Posterior cingulate gyrus (tissue), 11 donors: ENCODE measurements at regions of chr6 and their contacts with region 1.

Region 1: DNA sequence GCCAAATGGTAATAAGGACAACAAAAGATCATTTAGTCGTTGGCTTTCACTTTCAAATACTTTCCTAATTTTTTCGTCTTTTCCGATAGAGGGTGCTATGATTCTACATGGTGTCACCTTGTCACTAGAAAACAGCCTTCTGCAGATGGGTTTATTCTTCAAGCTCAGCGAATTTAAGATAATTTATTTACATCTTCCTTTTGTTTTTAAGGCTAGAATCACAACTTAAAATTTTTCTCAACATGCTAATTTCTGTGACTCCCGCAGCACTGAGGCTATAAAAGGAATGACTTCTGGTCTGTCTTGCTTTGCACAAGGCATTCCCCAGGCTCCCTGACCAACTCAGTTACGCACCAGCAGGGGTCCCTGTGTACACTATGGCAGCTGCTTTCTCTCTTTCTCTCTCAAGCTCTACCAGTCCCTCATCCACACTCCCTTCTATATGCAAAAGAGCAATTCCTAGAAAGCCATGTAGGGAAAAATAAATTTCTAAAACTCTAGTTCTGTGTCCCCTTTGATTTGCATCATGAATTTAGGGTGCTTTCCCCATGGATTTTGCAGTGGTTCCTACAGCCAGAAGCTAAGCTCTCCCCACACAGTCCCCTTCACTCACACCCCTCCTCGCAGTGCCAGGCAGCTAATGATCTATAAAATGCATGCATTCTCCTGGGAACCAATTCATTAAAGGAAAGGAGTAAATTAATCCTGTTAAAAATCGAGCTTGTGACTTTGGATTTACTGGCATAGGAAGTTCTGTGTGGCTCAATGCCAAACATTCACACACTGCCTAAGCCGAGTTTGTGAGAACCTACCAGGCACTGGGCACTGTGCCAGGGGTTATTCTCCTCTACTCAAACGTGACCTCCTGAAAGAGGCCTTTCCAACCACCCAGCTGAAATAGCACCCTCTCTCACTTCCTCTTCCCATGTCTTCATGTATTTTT is 74.5 kb downstream of the DCDC2 start:
- DNase-seq: peak; percentile 34 to 94 (median 66)

Region 2: GRCh38 chr6:24387818-24388217 is 104.5 kb after region 1 on chr6:
- intact Hi-C with region 1: loop called (anchors 2 kb)
- DNase-seq: no peak

Region 3: GRCh38 chr6:24524805-24525204 is 241.5 kb after region 1 on chr6:
- intact Hi-C with region 1: no loop called
- DNase-seq: peak in 2 of 10 donors; percentile 10 to 23

Region 4: DNA sequence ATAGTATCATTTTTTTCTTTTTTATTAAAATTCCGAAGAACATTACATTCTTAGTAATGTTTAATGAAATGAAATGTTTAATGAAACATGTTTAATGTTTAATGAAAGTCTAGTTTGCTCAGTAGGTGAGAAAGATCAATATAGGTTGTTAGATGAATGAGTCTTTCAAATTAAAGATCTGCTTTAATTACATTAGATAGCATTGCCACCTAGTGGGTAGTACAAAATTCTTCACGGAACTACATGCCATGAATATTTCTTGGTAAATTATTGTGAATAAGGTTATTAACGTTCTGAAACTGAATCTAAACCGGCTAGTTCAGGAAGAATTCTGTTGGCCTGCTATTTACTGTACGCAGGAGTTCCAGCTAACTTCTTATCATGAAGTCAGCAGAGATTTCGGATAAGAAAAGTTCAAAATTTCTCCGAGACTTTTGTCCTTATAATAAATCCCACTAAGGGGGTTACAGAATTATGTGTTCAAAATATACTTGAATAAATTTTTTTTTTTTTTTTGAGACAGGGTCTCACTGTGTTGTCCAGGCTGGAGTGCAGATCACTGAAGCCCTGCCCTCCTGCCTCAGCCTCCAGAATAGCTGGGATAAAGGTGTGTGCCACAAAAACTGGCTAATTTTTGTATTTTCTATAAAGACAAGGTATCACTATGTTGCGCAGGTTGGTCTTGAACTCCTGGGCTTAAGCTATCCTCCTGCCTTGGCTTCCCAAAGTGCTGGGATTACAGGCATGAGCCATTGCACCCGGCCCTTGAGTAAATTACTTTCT is 483.6 kb after region 1 on chr6:
- intact Hi-C with region 1: loop called (anchors 10 kb)
- DNase-seq: no peak